ENCODE measurements at regions of chr6 and their contacts with region 1.

Region 1: GRCh38 chr6:83221889-83222479 is 28.8 kb downstream of the RWDD2A start:
- DNase-seq: peak in 2 of 4 experiments; percentile 21 to 48
- ATAC-seq: peak; percentile 64; the same call in 2 of the 3 replicates
- H3K4me3 ChIP-seq: no peak overlapping the region
- H3K27ac ChIP-seq: no peak overlapping the region
- H3K4me1 ChIP-seq: no peaks in the 10 kb centered on the region
- H3K27me3 ChIP-seq: no peaks in the 10 kb centered on the region
- CTCF ChIP-seq: peak; percentile 33 to 75 (median 45); a peak in 3 of 6 replicates
- EP300 ChIP-seq: no peak
- POLR2A ChIP-seq: no peak
- RAD21 ChIP-seq: peak; percentile 82 to 84

Region 2: GRCh38 chr6:83252717-83253116 is 30.7 kb after region 1 on chr6:
- CTCF ChIA-PET with region 1: no interaction called
- POLR2A ChIA-PET with region 1: no interaction called
- in situ Hi-C with region 1: no loop called
- intact Hi-C with region 1: no loop called
- DNase-seq: no peak
- ATAC-seq: no peak
- H3K4me3 ChIP-seq: no peak overlapping the region
- H3K27ac ChIP-seq: no peak overlapping the region
- H3K4me1 ChIP-seq: no peaks in the 10 kb centered on the region
- H3K27me3 ChIP-seq: no peaks in the 10 kb centered on the region
- CTCF ChIP-seq: no peak
- EP300 ChIP-seq: no peak
- POLR2A ChIP-seq: no peak
- RAD21 ChIP-seq: no peak

Region 3: GRCh38 chr6:83417880-83418663 is 196.1 kb after region 1 on chr6:
- CTCF ChIA-PET with region 1: no interaction called
- POLR2A ChIA-PET with region 1: no interaction called
- in situ Hi-C with region 1: no loop called
- intact Hi-C with region 1: loop called (anchors 2 kb)
- DNase-seq: peak; percentile 18 to 67 (median 32)
- ATAC-seq: peak; percentile 93
- H3K4me3 ChIP-seq: no peak overlapping the region
- H3K27ac ChIP-seq: no peak overlapping the region
- H3K4me1 ChIP-seq: peaks cover 0 to 4% of the 10 kb centered on the region in 2 experiments; a peak in 1 of 5 replicates
- H3K27me3 ChIP-seq: no peaks in the 10 kb centered on the region
- CTCF ChIP-seq: peak; percentile 55 to 80 (median 55); a peak in 4 of 6 replicates
- EP300 ChIP-seq: no peak
- POLR2A ChIP-seq: no peak
- RAD21 ChIP-seq: peak; percentile 75 to 94

Region 4: DNA sequence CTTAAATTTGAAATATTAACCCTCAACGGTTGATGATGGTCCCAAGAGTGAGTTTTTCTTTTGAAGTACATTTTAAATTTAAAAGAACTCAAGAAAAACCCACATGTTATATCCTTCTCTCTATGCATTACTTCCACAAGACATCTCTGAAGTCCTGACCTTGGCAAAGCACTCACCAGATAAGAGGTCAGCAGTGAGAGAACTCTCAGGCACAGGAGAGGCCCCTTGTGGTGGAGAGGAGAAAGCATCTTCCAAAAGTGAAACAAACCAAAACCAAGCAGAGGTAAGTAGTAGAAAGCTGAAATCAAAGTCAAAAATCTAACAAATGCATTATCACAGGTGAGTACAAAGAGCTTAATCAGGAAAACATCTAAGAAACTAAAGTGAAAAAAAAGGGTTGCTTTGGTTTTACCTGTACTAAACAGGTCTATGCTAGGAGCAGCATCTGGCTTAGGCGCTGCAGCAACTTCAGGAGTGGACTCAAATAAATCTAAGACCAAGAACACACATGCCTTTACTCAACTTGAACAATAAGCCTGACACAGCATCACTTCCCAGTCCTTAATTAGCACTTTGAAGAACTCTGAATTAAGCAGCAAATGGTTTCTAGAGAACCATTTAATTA is 370.9 kb after region 1 on chr6:
- CTCF ChIA-PET with region 1: no interaction called
- POLR2A ChIA-PET with region 1: no interaction called
- in situ Hi-C with region 1: no loop called
- intact Hi-C with region 1: loop called (anchors 5 kb)
- DNase-seq: peak; percentile 8 to 62 (median 24)
- ATAC-seq: peak; percentile 98
- H3K4me3 ChIP-seq: no peak overlapping the region
- H3K27ac ChIP-seq: no peak overlapping the region
- H3K4me1 ChIP-seq: peaks cover 0 to 4% of the 10 kb centered on the region in 2 experiments; a peak in 1 of 5 replicates
- H3K27me3 ChIP-seq: peaks cover 2 to 5% of the 10 kb centered on the region in 2 experiments; a peak in 2 of 5 replicates
- CTCF ChIP-seq: peak; percentile 64 to 73 (median 69); a peak in 5 of 6 replicates
- EP300 ChIP-seq: no peak
- POLR2A ChIP-seq: no peak
- RAD21 ChIP-seq: peak; percentile 38 to 53; a peak in 3 of 4 replicates

Measured in K562 (cell line).